Activated CD8-positive, alpha-beta memory T cell treated with anti-CD3 and anti-CD28 coated beads, Interleukin-2, amount 10 ng/mL, durations not matched to agents 7 days and 5 days (primary cell): ENCODE measurements at regions of chr16 and their contacts with region 1.

Region 1: DNA sequence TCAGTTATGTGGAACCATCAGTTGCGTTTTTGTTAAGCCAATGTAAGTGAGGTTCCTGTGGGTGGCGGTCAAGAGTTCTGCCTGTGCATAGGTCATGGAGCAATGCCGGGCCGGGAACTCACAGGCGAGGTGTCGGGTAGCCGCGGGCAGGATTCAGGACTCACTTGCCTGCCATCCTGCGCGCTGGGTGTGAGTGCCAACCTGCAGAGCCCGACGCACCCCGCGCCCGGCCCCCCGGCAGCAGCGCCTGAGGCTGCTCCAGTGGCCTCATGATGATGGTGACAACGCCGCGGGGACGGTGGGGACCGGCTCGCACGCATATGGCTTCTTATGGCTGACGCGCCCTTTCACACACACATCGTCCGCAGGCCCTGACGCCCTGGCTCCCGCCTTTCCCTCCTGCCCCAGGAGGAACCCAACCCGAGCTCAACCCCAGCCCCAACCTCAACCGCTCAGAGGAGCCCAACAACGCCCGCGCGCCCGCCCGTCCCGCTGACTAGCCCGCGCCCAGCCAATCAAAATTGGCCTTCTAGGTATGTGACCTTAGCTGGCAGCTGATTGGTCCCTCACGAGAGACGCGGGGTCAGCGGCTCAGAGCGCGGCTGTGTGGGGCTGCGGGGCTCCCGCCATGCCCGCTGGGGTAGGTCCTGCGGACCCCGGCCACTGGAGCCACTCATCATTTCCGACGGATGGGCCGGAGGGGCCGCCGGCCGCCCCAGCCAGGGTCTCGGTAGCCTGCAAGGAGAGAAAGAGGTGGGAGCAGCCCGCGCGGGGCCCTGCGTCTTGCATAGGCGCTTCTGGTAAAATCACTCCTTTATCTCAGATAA is at the start of gene C16orf95:
- DNase-seq: peak; percentile 96
- ATAC-seq: peak; percentile 96
- H3K4me3 Mint-ChIP-seq: peak within 1 kb of the TSS; percentile 95
- H3K27ac Mint-ChIP-seq: peak within 1 kb of the TSS; percentile 99
- H3K4me1 Mint-ChIP-seq: peaks cover 25% of the 10 kb centered on the region
- H3K27me3 Mint-ChIP-seq: no peaks in the 10 kb centered on the region
- total RNA-seq, gene C16orf95: 11.2 to 13.6 TPM

Region 2: GRCh38 chr16:87185312-87185711 is 131.8 kb before region 1 on chr16:
- CTCF ChIA-PET with region 1: no interaction called
- DNase-seq: no peak
- ATAC-seq: no peak
- H3K4me3 Mint-ChIP-seq: no peak overlapping the region
- H3K27ac Mint-ChIP-seq: no peak overlapping the region
- H3K4me1 Mint-ChIP-seq: no peaks in the 10 kb centered on the region
- H3K27me3 Mint-ChIP-seq: no peaks in the 10 kb centered on the region

Region 3: GRCh38 chr16:87383629-87384161 is 66.6 kb after region 1 on chr16 and contains the start of gene FBXO31:
- CTCF ChIA-PET with region 1: interaction called, 15 read pairs
- DNase-seq: peak; percentile 91
- ATAC-seq: peak; percentile 67
- H3K4me3 Mint-ChIP-seq: peak within 1 kb of the TSS; percentile 80
- H3K27ac Mint-ChIP-seq: peak within 1 kb of the TSS; percentile 96
- H3K4me1 Mint-ChIP-seq: peaks cover 61% of the 10 kb centered on the region
- H3K27me3 Mint-ChIP-seq: no peaks in the 10 kb centered on the region
- total RNA-seq, gene FBXO31: 38.8 TPM

Region 4: DNA sequence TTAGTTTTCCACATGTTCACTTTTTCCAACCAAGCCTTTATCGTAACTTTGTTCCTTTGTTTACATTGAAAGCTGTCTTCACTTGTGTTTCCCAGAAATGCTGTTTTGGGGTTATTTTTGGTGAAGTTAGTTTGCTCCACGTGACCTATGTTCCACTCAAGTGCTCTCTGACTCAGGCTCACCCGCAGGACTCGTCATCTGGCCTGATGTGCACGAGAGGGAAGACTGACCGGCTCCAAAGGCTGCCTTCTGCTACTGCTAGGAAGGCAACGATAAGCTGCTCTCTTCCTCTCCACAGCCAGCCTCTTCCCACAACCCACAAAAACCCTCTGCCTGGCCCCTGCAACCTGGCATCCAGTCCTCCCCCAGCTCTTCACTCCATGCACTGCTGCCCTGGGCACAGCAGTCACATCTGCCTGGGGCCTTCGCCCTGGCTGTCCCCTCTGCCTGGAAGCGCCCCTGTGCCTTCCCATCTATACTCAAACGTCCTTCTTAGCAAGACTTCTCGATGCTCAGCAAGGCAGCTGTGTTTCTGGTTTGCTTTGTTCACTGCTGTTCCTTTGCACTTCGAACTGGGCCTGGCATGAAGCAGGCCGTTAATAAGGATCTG is 147.7 kb after region 1 on chr16:
- CTCF ChIA-PET with region 1: no interaction called
- DNase-seq: no peak
- ATAC-seq: peak; percentile 54
- H3K4me3 Mint-ChIP-seq: no peak overlapping the region
- H3K27ac Mint-ChIP-seq: no peak overlapping the region
- H3K4me1 Mint-ChIP-seq: peaks cover 17% of the 10 kb centered on the region
- H3K27me3 Mint-ChIP-seq: peaks cover 40% of the 10 kb centered on the region